ENCODE measurements at regions of chr10 and their contacts with region 1.

Region 1: GRCh38 chr10:126749015-126749655 is 78.6 kb upstream of the C10orf90 start:
- DNase-seq: peak; percentile 55 to 84
- ATAC-seq: peak; percentile 99 to 100
- H3K4me3 ChIP-seq: no peak overlapping the region
- H3K27ac ChIP-seq: 0 out of 6 replicates have a peak overlapping the region, but pooled peaks of 1 of the 2 experiments have one; percentile 5
- H3K4me1 ChIP-seq: no peaks in the 10 kb centered on the region
- CTCF ChIP-seq: peak; percentile 81
- EP300 ChIP-seq: no peak
- POLR2A ChIP-seq: no peak
- RAD21 ChIP-seq: peak; percentile 85 to 86

Region 2: DNA sequence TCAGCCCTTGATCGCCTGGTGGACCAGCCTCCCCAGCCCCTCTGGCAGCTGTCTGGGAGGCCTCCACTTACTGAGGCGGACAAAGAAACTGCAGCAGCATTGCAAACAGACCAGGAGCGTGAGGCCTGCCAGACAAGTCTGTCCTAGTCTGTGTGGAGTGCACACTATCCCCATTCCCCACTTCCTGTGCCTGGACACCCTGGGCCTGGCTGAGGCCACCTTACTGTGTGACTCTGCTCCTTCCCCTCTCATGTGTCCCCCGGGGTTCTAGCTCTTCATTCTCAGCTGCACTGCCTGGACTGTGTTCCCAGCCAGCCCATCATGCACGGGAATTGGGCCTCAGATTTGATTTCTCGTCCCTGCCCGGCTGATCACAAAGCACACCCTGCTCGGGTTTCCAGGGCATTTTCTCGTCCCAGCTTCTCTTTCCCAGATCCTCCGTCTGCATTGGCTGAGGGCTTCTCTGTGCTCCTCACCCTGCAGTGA is 62.0 kb before region 1 on chr10:
- CTCF ChIA-PET with region 1: no interaction called
- POLR2A ChIA-PET with region 1: no interaction called
- DNase-seq: no peak
- ATAC-seq: no peak
- H3K4me3 ChIP-seq: no peak overlapping the region
- H3K27ac ChIP-seq: no peak overlapping the region
- H3K4me1 ChIP-seq: no peaks in the 10 kb centered on the region
- CTCF ChIP-seq: no peak
- EP300 ChIP-seq: no peak
- POLR2A ChIP-seq: no peak
- RAD21 ChIP-seq: no peak

Region 3: GRCh38 chr10:126734015-126734414 is 15.1 kb before region 1 on chr10:
- CTCF ChIA-PET with region 1: interaction called, 33 read pairs
- POLR2A ChIA-PET with region 1: no interaction called
- DNase-seq: no peak
- ATAC-seq: no peak
- H3K4me3 ChIP-seq: no peak overlapping the region
- H3K27ac ChIP-seq: no peak overlapping the region
- H3K4me1 ChIP-seq: no peaks in the 10 kb centered on the region
- CTCF ChIP-seq: no peak
- EP300 ChIP-seq: no peak
- POLR2A ChIP-seq: no peak
- RAD21 ChIP-seq: no peak

Region 4: GRCh38 chr10:126759531-126759930 is 10.4 kb after region 1 on chr10:
- CTCF ChIA-PET with region 1: interaction called, 15 read pairs
- POLR2A ChIA-PET with region 1: no interaction called
- DNase-seq: no peak
- ATAC-seq: no peak
- H3K4me3 ChIP-seq: no peak overlapping the region
- H3K27ac ChIP-seq: no peak overlapping the region
- H3K4me1 ChIP-seq: no peaks in the 10 kb centered on the region
- CTCF ChIP-seq: no peak
- EP300 ChIP-seq: no peak
- POLR2A ChIP-seq: no peak
- RAD21 ChIP-seq: no peak

Measured in A549 (cell line).